ENCODE measurements at regions of chr9 and their contacts with region 1.

Region 1: GRCh38 chr9:21110708-21111576 is 30.7 kb downstream of the IFNW1 start:
- DNase-seq: peak; percentile 36
- ATAC-seq: peak; percentile 74; the same call in 1 of the 2 replicates
- H3K4me3 ChIP-seq: no peak overlapping the region
- H3K27ac ChIP-seq: no peak overlapping the region
- H3K4me1 ChIP-seq: no peaks in the 10 kb centered on the region
- H3K27me3 ChIP-seq: no peaks in the 10 kb centered on the region
- CTCF ChIP-seq: peak; percentile 51; the same call in 1 of the 2 replicates

Region 2: DNA sequence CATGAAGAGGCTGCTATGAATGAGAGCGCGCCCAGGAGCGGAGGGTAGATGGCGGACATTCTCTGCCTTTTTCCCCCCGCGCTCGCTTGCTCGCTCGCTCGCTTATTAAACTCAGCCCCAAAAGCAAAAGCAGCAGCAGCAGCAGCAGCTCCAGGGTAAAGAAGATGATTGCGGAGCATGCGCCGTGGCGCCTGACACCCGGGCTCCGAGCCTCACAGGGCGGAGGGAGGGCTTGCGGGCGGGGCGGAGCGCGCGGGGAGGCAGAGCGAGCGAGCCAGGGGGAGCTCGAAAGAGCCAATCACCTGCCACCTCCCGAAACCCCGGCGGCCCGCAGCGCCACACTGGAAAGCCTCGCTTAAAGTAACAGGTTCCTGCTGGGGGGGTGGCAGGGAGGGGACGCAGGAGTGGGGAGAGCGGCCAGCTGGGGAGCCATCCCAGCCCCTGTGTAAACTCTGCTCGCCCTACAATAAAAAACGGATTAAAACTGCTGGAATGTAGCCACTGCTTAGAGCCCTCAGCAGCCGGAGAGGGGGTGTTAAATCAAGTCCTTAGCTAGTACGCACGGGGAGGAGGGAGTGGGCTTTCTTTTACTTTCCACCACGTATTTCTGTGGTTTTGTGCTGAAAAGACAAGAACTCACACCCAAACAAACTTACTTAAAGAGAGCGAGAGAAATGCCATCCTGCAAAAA is 488.5 kb before region 1 on chr9 and contains the start of gene MLLT3:
- CTCF ChIA-PET with region 1: no interaction called
- POLR2A ChIA-PET with region 1: no interaction called
- in situ Hi-C with region 1: no loop called
- intact Hi-C with region 1: loop called (anchors 5 kb)
- DNase-seq: peak; percentile 8
- ATAC-seq: peak; percentile 96
- H3K4me3 ChIP-seq: peak within 1 kb of the TSS; percentile 51 to 54
- H3K27ac ChIP-seq: no peak within 1 kb of the TSS
- H3K4me1 ChIP-seq: no peaks in the 10 kb centered on the region
- H3K27me3 ChIP-seq: peaks cover 2% of the 10 kb centered on the region
- CTCF ChIP-seq: no peak
- total RNA-seq, gene MLLT3: 0.49 TPM

Measured in Panc1 (cell line).